Naive thymus-derived CD4-positive, alpha-beta T cell (primary cell): ENCODE measurements at regions of chr15 and their contacts with region 1.

Region 1: DNA sequence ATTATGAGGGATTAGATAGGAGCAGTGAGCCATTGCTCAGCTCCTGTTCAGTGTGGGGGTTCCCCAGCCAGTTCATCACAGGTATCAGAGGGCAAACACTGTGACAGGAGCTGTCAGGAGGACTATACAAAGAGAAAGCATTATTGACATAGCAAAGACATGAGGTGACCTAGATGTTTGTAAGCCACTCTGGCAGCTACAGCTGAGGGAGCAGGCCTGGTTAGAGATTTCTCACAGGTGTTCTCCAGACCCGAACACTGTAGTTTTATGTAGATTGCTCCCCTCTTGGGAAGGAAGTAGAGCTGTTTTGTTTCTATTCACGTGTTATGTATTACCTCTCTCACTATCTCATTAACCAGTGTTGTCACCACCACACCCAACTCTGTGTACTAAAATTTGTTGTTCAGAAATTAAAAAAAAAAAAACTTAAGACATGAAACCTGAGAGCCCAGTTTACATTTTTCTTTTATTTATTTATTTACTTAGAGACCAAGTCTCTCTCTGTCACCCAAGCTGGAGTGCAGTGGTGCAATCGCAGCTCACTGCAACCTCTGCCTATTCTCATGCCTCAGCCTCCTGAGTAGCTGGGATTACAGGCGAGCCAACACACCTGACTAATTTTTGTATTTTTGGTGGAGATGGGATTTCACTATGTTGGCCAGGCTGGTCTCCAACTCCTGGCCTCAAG is 123.7 kb downstream of the RBPMS2 start:
- DNase-seq: peak in 7 of 9 donors; percentile 26 to 63 (median 45)
- ATAC-seq: peak; percentile 95
- H3K4me3 ChIP-seq: peak overlapping the region; percentile 8
- H3K4me3 Mint-ChIP-seq: peak overlapping the region; percentile 21 to 83 (median 64)
- H3K27ac ChIP-seq: peak overlapping the region; percentile 58
- H3K27ac Mint-ChIP-seq: peak overlapping the region; percentile 68 to 96 (median 88)
- H3K4me1 ChIP-seq: peaks cover 24 to 32% of the 10 kb centered on the region in 2 donors
- H3K4me1 Mint-ChIP-seq: peaks cover 29 to 80% (median 62%) of the 10 kb centered on the region in 7 donors
- H3K27me3 ChIP-seq: no peaks in the 10 kb centered on the region
- H3K27me3 Mint-ChIP-seq: no peaks in the 10 kb centered on the region

Region 2: DNA sequence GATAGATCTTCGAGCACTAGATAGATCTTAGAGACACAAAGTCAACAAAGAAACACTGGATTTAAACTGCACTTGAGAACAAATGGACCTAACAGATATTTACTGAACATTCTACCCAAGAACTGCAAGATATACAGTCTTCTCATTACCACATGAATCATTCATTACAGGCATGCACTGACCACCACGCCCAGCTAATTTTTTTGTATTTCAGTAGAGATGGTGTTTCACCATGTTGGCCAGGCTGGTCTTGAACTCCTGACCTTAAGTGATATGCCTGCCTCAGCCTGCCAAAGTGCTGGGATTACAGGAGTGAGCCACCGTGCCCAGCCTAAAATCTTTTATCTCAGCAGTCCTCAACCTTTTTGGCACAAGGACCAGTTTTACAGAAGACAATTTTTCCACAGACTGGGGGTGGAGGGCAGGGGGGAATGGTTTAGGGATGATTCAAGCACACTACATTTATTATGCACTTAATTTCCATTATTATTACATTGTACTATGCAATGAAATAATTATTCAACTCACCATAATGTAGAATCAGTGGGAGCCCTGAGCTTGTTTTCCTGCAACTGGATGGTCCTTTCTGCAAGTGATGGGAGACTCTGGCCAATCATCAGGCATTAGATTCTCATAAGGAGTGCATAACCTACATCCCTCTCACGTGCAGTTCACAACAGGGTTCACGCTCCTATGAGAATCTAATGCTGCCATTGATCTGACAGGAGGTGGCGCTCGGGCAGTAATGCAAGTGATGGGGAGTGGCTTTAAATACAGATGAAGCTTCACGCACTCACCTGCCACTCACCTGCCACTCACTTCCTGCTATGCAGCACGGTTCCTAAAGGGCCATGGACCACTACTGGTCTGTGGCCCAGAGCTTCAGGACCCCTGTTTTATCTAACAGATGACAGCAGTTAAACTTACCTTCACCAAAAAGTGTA is 317.5 kb before region 1 on chr15:
- CTCF ChIA-PET with region 1: no interaction called
- POLR2A ChIA-PET with region 1: no interaction called
- intact Hi-C with region 1: loop called in 1 of 2 experiments (anchors 5 kb)
- DNase-seq: peak in 7 of 9 donors; percentile 27 to 51 (median 37)
- ATAC-seq: peak; percentile 65
- H3K4me3 ChIP-seq: no peak overlapping the region
- H3K4me3 Mint-ChIP-seq: peak overlapping the region in 7 of 10 donors; percentile 13 to 46 (median 29)
- H3K27ac ChIP-seq: peak overlapping the region; percentile 42
- H3K27ac Mint-ChIP-seq: peak overlapping the region; percentile 60 to 91 (median 77)
- H3K4me1 ChIP-seq: peaks cover 4 to 14% of the 10 kb centered on the region in 2 donors
- H3K4me1 Mint-ChIP-seq: peaks cover 6 to 36% (median 29%) of the 10 kb centered on the region in 7 donors
- H3K27me3 ChIP-seq: no peaks in the 10 kb centered on the region
- H3K27me3 Mint-ChIP-seq: no peaks in the 10 kb centered on the region

Region 3: DNA sequence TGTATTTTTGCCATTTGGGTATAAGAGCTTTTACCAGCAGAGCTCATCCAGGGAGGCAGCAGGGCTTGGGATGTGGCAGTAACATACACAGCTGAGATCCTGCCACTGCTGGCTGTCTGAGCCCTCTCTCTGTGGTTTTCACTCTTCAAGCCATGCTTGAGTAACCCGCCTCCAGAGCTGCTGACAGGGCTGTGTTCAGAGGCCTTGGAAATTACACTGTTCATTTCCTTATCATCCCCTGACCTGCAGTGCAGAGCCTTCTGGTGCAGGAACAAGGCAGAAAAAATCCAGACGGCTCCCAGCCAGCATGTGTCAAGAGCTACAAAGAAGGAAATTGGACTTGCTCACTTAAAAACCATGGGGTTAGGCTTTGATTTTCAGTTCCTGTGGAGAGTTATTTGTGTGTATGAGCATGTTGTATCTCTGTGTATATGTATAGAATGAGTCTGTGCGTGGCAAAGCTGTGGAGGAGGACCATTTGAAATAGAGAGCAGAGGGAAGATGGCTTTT is 144.4 kb before region 1 on chr15:
- CTCF ChIA-PET with region 1: interaction called, 4 read pairs
- POLR2A ChIA-PET with region 1: interaction called, 7 read pairs
- intact Hi-C with region 1: loop called in 1 of 2 experiments (anchors 1 kb)
- DNase-seq: peak in 8 of 9 donors; percentile 14 to 46 (median 31)
- ATAC-seq: peak; percentile 76
- H3K4me3 ChIP-seq: peak overlapping the region; percentile 15
- H3K4me3 Mint-ChIP-seq: peak overlapping the region; percentile 25 to 79 (median 65)
- H3K27ac ChIP-seq: peak overlapping the region; percentile 46
- H3K27ac Mint-ChIP-seq: peak overlapping the region; percentile 43 to 97 (median 85)
- H3K4me1 ChIP-seq: peaks cover 27 to 88% of the 10 kb centered on the region in 2 donors
- H3K4me1 Mint-ChIP-seq: peaks cover 37 to 93% (median 81%) of the 10 kb centered on the region in 7 donors
- H3K27me3 ChIP-seq: no peaks in the 10 kb centered on the region
- H3K27me3 Mint-ChIP-seq: no peaks in the 10 kb centered on the region

Region 4: GRCh38 chr15:64582202-64582601 is 69.5 kb before region 1 on chr15:
- CTCF ChIA-PET with region 1: no interaction called
- POLR2A ChIA-PET with region 1: interaction called, 7 read pairs
- intact Hi-C with region 1: loop called in 1 of 2 experiments (anchors 5 kb)
- DNase-seq: no peak
- ATAC-seq: peak; percentile 41
- H3K4me3 ChIP-seq: no peak overlapping the region
- H3K4me3 Mint-ChIP-seq: peak overlapping the region in 8 of 10 donors; percentile 2 to 86 (median 28)
- H3K27ac ChIP-seq: no peak overlapping the region
- H3K27ac Mint-ChIP-seq: peak overlapping the region in 8 of 9 donors; percentile 4 to 93 (median 68)
- H3K4me1 ChIP-seq: peaks cover 0 to 28% of the 10 kb centered on the region in 2 donors
- H3K4me1 Mint-ChIP-seq: peaks cover 35 to 75% (median 65%) of the 10 kb centered on the region in 7 donors
- H3K27me3 ChIP-seq: no peaks in the 10 kb centered on the region
- H3K27me3 Mint-ChIP-seq: no peaks in the 10 kb centered on the region

Region 5: GRCh38 chr15:64622410-64623260 is 29.1 kb before region 1 on chr15:
- CTCF ChIA-PET with region 1: interaction called, 5 read pairs
- POLR2A ChIA-PET with region 1: interaction called, 4 read pairs
- intact Hi-C with region 1: loop called (anchors 1 to 5 kb)
- DNase-seq: peak; percentile 31 to 80 (median 66)
- ATAC-seq: peak; percentile 89
- H3K4me3 ChIP-seq: peak overlapping the region; percentile 46
- H3K4me3 Mint-ChIP-seq: peak overlapping the region; percentile 42 to 90 (median 80)
- H3K27ac ChIP-seq: peak overlapping the region; percentile 55
- H3K27ac Mint-ChIP-seq: peak overlapping the region; percentile 82 to 94 (median 91)
- H3K4me1 ChIP-seq: peaks cover 53 to 92% of the 10 kb centered on the region in 2 donors
- H3K4me1 Mint-ChIP-seq: peaks cover 72 to 98% (median 93%) of the 10 kb centered on the region in 7 donors
- H3K27me3 ChIP-seq: no peaks in the 10 kb centered on the region
- H3K27me3 Mint-ChIP-seq: no peaks in the 10 kb centered on the region

Region 6: DNA sequence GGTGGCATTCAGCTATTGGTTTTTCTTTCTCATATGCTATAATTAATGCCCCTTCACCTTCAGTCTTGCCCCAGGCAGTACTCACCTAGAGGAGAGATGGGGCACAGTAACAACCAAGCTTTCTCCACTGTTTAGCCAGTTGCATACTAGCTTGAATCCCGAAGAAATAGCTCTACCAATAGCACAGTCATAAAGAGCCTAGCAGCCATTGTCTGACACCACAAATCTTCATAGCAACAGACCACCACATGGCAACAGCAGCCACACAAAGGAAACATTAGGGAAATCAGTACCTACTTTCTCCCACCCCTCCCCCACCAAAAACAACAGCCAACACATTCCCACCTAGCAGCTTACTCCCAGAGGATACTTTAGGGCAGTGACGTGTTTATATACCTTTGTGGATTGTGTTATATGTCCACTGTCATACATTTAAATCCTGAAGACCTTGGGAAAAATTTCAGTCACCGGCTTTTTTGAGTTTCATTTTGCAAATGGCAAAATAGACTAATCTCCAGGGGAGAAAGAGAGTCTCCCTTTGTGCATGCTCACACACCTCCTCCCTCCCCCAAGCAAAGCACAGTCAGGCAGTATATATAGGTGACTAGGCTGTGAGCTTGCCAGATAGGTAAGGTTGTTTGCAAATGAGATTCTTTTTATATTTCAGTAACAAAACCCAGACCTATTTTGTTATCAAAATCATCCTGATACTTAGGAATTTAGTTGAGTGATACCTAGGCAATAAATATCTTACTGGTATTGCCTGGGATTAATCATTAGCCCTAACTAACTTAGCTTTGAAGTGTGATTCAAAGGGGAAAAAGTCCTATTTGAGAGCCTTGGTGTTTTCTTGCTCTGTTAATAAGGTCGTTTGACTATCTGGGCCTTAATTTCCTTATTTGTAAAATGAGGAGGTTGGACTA is 16.9 kb before region 1 on chr15:
- CTCF ChIA-PET with region 1: interaction called, 10 read pairs
- POLR2A ChIA-PET with region 1: interaction called, 6 read pairs
- intact Hi-C with region 1: loop called (anchors 2 kb)
- DNase-seq: peak in 1 of 9 donors; percentile 13
- ATAC-seq: peak; percentile 55
- H3K4me3 ChIP-seq: peak overlapping the region; percentile 5
- H3K4me3 Mint-ChIP-seq: peak overlapping the region; percentile 51 to 74 (median 68)
- H3K27ac ChIP-seq: peak overlapping the region; percentile 47
- H3K27ac Mint-ChIP-seq: peak overlapping the region; percentile 37 to 87 (median 82)
- H3K4me1 ChIP-seq: peaks cover 50 to 53% of the 10 kb centered on the region in 2 donors
- H3K4me1 Mint-ChIP-seq: peaks cover 51 to 86% (median 72%) of the 10 kb centered on the region in 7 donors
- H3K27me3 ChIP-seq: no peaks in the 10 kb centered on the region
- H3K27me3 Mint-ChIP-seq: no peaks in the 10 kb centered on the region

Region 7: DNA sequence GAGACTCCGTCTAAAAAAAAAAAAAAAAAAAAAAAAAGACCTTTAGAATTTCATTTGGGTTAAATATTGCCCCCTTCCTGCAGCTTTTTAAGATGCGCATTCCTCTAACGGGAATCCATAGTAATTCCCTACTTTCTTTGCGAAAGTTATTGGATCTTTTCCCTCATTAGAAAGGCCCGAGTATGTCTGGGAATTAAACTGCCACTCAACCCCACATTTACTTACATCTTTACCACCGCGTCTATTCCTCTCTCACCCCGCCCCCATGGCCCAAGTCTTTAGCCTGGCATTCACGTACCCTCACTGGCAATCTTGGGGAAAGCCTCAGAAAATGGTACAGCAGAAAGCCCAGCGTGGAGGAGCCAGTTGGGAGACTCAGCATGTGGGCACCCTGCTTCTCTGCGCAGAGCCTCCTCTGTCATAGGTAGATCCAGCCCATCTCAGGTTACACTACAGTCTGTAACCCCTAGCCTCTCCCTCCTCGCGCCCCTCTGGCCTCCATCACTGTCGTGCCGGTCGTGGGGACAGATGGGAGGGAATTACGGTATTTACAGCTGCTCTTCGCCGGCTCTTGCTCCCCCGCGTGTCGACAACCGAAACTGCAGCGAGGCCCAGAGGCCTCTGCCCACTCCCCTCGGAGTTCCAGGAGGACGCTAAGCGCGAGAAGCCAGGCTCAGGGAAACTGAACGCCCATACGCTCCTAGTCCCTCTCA is 253.6 kb after region 1 on chr15:
- CTCF ChIA-PET with region 1: no interaction called
- POLR2A ChIA-PET with region 1: no interaction called
- intact Hi-C with region 1: no loop called
- DNase-seq: peak; percentile 58 to 79 (median 72)
- ATAC-seq: peak; percentile 84
- H3K4me3 ChIP-seq: peak overlapping the region; percentile 38
- H3K4me3 Mint-ChIP-seq: peak overlapping the region; percentile 22 to 84 (median 74)
- H3K27ac ChIP-seq: no peak overlapping the region
- H3K27ac Mint-ChIP-seq: peak overlapping the region in 6 of 9 donors; percentile 3 to 78 (median 44)
- H3K4me1 ChIP-seq: peaks cover 17 to 21% of the 10 kb centered on the region in 2 donors
- H3K4me1 Mint-ChIP-seq: peaks cover 23 to 44% (median 41%) of the 10 kb centered on the region in 7 donors
- H3K27me3 ChIP-seq: no peaks in the 10 kb centered on the region
- H3K27me3 Mint-ChIP-seq: peaks cover 0 to 14% (median 7%) of the 10 kb centered on the region in 5 donors